ENCODE measurements at regions of chr5 and their contacts with region 1.

Region 1: DNA sequence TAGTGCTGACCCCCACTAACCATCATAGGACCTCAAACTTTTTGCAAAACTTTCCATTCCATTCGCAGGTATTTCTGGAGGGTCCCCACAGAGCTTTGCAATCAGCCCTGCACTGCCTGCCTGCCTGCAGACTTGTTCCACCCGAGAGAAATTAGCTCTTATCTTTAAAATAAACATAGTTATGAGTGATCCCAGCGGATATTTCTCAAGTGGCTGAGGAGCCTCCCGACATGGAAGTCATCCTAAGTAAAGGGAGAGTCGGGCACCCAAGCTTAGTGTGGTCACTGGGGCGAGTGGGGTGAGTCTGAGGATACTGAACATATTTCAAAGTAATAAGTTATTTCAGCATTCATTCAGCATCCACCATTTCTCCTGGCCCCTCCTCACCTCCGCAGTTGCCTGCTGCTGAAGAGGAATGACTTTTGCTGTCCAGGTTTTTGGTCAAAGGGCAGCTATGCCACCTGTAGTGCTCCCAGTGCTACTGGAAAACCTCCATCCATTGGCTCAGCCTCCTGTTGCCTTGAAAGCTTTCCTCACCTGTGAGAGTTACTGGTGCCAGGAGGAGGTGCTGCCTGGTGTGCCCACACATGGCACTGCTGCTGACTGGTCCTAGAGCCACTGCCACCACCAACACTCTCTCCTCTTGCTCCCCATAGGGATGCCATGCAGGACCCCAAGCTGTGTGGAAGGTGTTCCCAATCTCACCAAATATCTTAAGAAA is 89.7 kb upstream of the PCSK1 start:
- DNase-seq: no peak
- CTCF ChIP-seq: no peak

Region 2: DNA sequence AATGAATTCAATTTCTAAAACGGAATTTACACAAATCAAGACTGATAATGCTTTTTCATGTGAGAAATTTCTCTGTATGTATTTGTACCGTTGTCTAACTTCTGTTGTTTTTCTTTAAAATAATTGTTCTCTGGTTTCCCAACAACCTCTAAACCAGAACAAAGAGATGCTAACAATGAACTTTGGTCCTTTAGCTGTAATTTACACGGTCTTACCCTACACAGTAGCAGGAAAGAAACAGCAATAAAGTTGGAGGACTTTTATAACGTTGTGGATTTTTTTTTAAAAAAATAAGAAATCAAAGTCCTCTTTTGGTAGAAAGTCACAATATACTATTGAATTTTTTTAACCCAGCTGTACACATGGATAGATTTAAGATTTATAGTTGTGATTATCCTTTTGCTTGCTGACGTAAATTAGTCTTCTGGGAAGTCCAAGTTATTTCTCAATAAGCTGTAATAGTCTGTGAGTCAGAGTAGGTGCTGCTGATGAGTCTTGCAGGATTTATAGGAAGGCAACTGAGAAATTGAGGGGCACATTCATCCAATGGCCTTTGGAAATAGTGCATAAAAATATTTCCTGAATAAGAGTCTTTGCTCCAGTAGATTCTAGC is 13.0 kb before region 1 on chr5:
- CTCF ChIA-PET with region 1: interaction called, 14 read pairs
- POLR2A ChIA-PET with region 1: no interaction called
- DNase-seq: no peak
- CTCF ChIP-seq: no peak